ENCODE measurements at regions of chr3 and their contacts with region 1.

Region 1: DNA sequence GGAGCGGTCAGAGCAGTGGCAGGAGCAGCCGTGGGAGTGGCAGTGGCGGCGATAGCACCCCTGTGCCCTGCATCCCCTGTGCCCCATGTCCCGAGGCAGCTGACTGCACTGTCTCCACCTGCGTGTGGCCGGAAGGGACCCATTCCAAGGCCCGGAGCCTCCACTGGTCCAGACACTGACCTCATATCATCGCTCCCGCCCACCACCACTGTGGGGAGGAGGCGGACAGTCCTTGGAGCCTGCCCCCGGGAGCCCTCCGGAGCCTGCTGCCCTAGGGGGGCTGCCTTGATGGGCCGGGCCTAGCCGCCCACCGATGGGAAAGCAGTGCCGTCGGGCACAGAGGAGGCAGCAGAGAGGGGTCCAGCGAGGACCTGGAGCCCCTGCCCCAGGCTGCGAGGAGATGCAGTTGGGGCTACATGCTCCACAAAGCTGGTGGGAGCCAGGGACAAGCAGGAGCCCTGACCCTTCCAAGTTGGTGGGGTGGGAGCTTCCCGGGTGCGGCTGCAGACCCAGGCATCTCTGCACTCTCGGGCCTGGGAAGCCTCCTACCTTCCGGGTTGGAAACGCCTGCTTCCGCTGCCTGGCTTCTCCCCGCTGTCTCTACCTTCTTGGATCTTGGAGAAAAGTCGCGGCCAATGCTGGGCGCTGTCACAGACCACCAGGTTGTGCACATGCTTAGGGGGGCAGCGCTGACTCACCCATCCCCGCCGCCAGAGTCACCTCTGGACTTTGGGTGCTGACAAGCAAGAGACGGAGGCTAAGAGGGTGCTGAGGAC is 283.2 kb upstream of the ROBO1 start:
- DNase-seq: no peak
- H3K4me3 ChIP-seq: no peak overlapping the region
- CTCF ChIP-seq: no peak
- POLR2A ChIP-seq: no peak

Region 2: GRCh38 chr3:79618883-79619282 is 432.1 kb before region 1 on chr3:
- intact Hi-C with region 1: loop called (anchors 10 kb)
- DNase-seq: no peak
- H3K4me3 ChIP-seq: no peak overlapping the region
- CTCF ChIP-seq: no peak
- POLR2A ChIP-seq: no peak

Region 3: GRCh38 chr3:80331494-80332170 is 280.6 kb after region 1 on chr3:
- intact Hi-C with region 1: no loop called
- DNase-seq: no peak
- H3K4me3 ChIP-seq: no peak overlapping the region
- CTCF ChIP-seq: no peak
- POLR2A ChIP-seq: no peak

Measured in lower leg skin (tissue), 4 donors.